ENCODE measurements at regions of chr17 and their contacts with region 1.

Region 1: DNA sequence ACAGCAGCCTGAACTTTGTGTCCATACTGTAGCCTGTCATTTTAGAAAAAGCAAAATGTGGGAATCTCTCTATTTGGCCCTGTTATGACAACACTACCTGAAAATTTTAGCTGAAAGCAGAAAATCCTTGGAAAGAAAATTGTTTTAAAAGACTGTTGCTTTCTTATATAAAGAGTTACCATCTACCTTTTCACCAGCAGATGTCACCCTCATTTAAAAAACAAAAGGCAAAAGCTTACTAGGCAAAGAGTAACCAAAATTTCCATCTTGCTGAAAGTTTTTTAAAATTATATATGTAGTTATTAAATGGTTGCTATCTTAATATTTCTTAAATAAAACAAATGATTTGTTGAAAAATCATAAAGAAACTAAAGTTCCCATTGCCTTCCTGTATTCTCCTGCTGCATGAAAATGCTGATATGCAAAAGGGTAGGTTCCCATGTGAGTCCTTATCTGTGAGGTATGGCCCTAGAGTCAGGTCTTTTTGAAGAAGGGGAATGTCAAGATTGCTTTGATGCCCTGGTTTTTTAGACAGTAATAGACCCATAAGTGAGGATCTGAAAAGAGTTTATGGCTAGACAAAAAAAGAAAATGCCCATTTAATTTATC is 61.0 kb downstream of the TNRC6C start:
- DNase-seq: no peak
- ATAC-seq: peak; percentile 54
- H3K4me3 Mint-ChIP-seq: peak overlapping the region; percentile 63
- H3K27ac Mint-ChIP-seq: peak overlapping the region; percentile 88
- H3K4me1 Mint-ChIP-seq: peaks cover 19% of the 10 kb centered on the region
- H3K27me3 Mint-ChIP-seq: no peaks in the 10 kb centered on the region

Region 2: DNA sequence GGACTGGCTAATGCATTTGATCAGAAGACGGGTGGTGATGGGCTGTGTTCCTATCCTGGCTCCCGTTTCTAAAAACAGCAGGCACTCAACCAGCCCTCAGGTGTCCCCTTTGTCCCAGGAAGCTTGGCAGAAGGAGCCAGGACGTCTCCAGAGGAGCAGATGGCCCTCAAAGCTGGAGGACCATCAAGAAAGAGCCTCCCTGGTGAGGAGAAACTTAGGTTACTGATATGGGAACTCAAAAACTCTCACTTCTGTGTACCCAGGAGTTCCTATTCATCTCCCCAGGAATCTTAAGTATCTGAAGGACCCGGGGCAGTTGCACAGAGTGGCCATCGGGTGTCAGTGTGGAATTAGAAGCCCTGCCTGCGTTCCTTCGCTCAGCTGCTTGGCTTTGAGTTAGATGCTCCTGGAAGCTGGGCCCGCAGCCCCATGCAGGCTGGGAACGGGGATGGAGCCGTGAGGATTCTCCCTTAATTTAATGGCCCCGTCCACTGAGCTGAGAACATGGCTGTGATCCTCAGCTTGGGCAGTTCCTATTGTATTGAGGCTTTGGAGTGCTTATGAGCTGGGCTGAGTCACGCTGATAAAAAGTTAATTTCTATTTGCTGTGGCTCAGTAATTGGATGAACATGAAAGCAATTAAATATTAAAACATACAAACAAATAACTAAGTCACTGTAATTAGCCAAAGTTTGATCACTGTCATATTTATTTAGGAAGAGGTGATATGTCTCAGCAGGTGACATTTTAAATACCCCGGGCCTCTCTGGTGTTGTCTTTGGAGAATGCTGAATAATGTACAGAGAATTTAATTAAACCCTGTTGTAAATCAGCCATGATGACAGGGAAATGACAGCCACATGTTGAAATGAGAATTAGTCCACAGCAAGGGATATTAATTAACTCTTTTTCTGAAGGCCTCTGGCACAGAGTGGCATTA is 476.6 kb before region 1 on chr17:
- CTCF ChIA-PET with region 1: interaction called, 31 read pairs
- DNase-seq: peak; percentile 75
- ATAC-seq: peak; percentile 88
- H3K4me3 Mint-ChIP-seq: no peak overlapping the region
- H3K27ac Mint-ChIP-seq: no peak overlapping the region
- H3K4me1 Mint-ChIP-seq: peaks cover 4% of the 10 kb centered on the region
- H3K27me3 Mint-ChIP-seq: peaks cover 47% of the 10 kb centered on the region

Region 3: DNA sequence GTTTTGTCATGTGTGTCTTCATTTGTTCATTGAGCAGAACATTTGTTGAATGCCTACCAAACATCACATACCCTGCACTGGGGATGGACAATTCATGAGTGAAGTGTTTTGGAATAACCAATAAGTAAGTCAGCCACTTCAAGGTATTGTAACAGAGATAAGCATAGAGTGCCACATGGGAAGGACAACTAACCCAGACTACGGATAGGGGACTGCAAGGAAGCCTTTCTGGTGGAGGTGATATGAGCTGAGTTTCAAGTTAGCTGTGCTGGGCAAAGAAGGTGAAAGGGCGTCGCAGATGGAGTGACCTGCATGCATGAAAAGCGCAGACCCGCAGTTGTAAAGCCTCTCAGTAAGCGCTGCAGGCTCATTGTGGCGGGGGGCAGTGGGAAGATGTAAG is 17.8 kb after region 1 on chr17:
- CTCF ChIA-PET with region 1: interaction called, 10 read pairs
- DNase-seq: no peak
- ATAC-seq: no peak
- H3K4me3 Mint-ChIP-seq: no peak overlapping the region
- H3K27ac Mint-ChIP-seq: no peak overlapping the region
- H3K4me1 Mint-ChIP-seq: no peaks in the 10 kb centered on the region
- H3K27me3 Mint-ChIP-seq: no peaks in the 10 kb centered on the region

Region 4: DNA sequence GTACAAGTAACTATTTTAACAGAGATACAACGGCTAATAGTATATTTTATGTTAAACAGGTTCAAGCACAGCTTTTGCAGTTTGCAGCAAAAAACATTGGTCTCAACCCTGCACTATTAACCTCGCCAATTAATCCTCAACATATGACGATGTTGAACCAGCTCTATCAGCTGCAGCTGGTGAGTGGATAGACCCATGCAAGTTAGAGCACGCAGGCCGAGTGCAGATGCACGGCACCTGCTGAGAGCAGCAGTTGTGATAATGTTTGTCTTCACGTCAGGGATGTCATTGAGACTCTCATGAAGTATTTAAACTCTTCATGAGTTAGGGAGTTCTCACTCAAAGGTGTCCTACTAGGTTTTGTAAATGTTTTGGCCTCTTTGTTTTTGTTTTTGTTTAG is 63.5 kb after region 1 on chr17:
- CTCF ChIA-PET with region 1: interaction called, 14 read pairs
- DNase-seq: no peak
- ATAC-seq: no peak
- H3K4me3 Mint-ChIP-seq: no peak overlapping the region
- H3K27ac Mint-ChIP-seq: no peak overlapping the region
- H3K4me1 Mint-ChIP-seq: peaks cover 12% of the 10 kb centered on the region
- H3K27me3 Mint-ChIP-seq: no peaks in the 10 kb centered on the region

Region 5: DNA sequence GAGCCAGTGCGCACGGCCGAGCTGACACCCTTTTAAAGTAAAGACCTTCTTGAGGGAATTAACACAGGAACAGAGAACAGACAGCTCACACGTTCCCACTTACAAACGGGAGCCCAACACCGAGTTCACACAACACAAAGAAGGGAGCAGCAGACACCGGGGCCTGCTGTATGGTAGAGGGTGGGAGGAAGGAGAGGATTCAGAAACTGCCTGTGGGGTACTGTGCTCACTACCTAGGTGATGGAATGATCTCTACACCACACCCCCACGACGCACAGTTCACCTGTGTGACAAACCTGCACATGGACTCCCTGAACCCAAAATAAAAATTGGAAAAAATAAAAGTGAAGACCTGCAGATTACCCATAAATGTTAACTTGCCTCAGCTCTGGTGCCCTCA is 76.6 kb after region 1 on chr17:
- CTCF ChIA-PET with region 1: no interaction called
- DNase-seq: no peak
- ATAC-seq: no peak
- H3K4me3 Mint-ChIP-seq: no peak overlapping the region
- H3K27ac Mint-ChIP-seq: no peak overlapping the region
- H3K4me1 Mint-ChIP-seq: no peaks in the 10 kb centered on the region
- H3K27me3 Mint-ChIP-seq: no peaks in the 10 kb centered on the region

Region 6: DNA sequence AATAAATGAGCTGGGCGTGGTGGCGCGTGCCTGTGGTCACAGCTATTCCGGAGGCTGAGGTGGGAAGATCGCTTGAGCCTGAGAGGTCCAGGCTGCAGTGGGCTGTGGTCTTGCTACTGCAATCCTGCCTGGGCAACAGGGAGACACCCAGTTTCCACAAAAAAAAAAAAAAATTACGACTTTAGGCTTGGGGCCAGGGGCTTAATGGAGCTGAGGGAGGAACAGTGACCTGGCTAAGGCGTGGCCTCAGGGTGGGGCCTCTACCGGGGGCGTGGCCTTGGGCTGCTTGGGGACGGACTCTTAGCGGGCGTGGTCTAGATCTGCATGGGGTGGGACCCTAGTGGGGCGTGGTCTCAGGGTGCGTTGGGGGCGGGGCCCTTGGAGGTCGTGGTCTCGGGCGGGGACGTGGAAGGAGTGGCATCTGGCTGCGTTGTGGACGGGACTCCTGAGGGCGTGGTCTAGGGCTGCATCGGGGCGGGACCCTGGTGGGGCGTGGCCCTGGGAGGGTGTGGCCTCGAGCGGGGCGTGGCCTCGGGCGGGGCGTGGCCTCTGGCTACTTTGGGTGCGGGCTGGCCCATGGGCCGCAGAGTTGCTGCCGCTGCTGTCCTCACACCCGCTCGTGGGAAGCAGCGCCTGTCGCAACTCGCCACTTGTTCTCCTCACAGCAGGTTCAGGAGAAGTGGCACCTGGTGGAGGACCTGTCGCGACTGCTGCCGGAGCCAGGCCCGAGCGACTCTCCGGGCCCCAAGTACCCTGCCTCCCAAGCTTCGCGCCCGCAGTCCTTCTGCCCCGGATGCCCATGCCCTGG is 120.9 kb after region 1 on chr17:
- CTCF ChIA-PET with region 1: interaction called, 14 read pairs
- DNase-seq: peak; percentile 99
- ATAC-seq: peak; percentile 93
- H3K4me3 Mint-ChIP-seq: no peak overlapping the region
- H3K27ac Mint-ChIP-seq: peak overlapping the region; percentile 75
- H3K4me1 Mint-ChIP-seq: peaks cover 50% of the 10 kb centered on the region
- H3K27me3 Mint-ChIP-seq: no peaks in the 10 kb centered on the region